Aorta (tissue), 5 donors: ENCODE measurements at regions of chr10 and their contacts with region 1.

Region 1: DNA sequence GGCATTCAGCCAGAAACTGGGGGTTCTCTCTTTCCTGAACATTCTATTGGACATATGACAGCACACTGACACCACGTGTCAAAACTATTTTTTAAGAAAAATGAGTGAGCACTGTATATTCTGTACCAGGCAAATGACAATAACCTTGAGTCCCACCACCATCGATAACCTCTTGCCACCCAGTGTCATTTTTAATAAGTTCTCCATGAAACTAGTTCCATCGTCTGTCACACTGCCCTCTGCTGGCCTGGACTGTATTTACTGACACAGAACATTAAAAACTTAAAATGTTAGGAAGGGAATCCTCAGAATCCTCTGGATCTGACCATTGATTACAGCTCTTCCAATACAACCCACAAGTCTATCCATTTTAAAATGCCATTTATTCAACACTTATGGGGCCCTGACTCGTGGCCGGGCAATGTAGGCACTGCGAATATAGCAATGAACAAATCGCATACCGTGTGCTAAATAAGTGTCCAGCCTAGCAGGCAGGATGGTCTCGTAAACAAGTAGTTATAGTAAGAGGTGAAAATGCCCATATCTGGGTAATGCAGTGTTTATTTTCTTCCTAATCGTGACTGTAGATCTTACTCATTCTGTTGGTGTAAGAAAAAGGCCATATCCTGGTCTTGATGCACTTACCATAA is 35.9 kb upstream of the CACNB2 start:
- DNase-seq: peak; percentile 69 to 87
- ATAC-seq: no peak
- H3K4me3 ChIP-seq: peak overlapping the region in 1 of 2 donors; percentile 54
- H3K27ac ChIP-seq: no peak overlapping the region
- H3K4me1 ChIP-seq: no peaks in the 10 kb centered on the region
- H3K27me3 ChIP-seq: no peaks in the 10 kb centered on the region

Region 2: GRCh38 chr10:17847585-17848296 is 256.6 kb before region 1 on chr10:
- intact Hi-C with region 1: loop called in 1 of 2 experiments (anchors 5 kb)
- DNase-seq: no peak
- ATAC-seq: peak; percentile 38
- H3K4me3 ChIP-seq: no peak overlapping the region
- H3K27ac ChIP-seq: no peak overlapping the region
- H3K4me1 ChIP-seq: no peaks in the 10 kb centered on the region
- H3K27me3 ChIP-seq: no peaks in the 10 kb centered on the region

Region 3: DNA sequence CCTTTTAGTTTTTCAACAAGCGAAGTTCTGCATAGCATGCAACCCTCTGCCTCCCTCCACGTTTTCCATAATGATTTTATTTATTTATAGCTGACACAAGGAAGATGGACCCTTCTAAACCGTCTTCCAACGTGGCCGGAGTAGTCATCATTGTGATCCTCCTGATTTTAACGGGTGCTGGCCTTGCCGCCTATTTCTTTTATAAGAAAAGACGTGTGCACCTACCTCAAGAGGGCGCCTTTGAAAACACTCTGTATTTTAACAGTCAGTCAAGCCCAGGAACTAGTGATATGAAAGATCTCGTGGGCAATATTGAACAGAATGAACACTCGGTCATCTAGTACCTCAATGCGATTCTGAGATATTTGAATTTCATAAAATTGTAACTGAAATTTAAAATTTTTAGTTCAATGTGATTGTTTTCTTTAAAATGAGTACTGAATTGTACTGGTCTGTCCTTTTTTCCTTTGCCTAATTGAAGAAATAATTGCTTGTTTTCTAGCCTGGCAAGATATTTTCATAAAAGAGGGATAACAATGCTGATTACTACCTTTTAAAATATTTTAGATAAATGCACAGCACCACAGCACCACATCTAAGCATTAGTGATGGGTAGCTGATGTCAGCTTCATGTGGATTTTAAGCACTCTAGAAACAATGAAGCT is 194.1 kb before region 1 on chr10:
- intact Hi-C with region 1: loop called (anchors 2 to 5 kb)
- DNase-seq: no peak
- ATAC-seq: no peak
- H3K4me3 ChIP-seq: no peak overlapping the region
- H3K27ac ChIP-seq: no peak overlapping the region
- H3K4me1 ChIP-seq: no peaks in the 10 kb centered on the region
- H3K27me3 ChIP-seq: no peaks in the 10 kb centered on the region

Region 4: DNA sequence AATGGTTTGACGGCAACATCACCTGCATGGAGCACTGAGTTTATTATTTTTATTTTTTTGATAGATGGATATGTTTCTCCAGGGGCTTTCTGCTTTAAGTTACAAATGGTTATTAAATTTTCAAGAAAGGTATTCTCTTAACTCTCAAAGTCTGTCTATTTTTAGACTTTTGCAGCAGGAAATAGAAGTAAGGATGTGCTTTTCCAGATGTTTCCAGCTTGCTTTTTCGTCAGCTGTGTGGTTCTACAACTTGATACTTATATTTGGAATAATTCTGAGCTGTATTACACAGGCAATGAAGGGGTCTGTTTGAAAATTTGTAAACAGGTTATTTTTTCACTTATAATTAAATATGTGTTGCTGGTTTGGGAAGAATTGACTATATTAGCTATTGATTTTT is 104.9 kb after region 1 on chr10:
- intact Hi-C with region 1: no loop called
- DNase-seq: no peak
- ATAC-seq: no peak
- H3K4me3 ChIP-seq: no peak overlapping the region
- H3K27ac ChIP-seq: no peak overlapping the region
- H3K4me1 ChIP-seq: peaks cover 0 to 5% of the 10 kb centered on the region in 2 donors
- H3K27me3 ChIP-seq: no peaks in the 10 kb centered on the region

Region 5: GRCh38 chr10:19549503-19549902 is 1445.2 kb after region 1 on chr10:
- intact Hi-C with region 1: no loop called
- DNase-seq: no peak
- ATAC-seq: no peak
- H3K4me3 ChIP-seq: no peak overlapping the region
- H3K27ac ChIP-seq: no peak overlapping the region
- H3K4me1 ChIP-seq: no peaks in the 10 kb centered on the region
- H3K27me3 ChIP-seq: no peaks in the 10 kb centered on the region